ENCODE measurements at regions of chr1 and their contacts with region 1.

Region 1: DNA sequence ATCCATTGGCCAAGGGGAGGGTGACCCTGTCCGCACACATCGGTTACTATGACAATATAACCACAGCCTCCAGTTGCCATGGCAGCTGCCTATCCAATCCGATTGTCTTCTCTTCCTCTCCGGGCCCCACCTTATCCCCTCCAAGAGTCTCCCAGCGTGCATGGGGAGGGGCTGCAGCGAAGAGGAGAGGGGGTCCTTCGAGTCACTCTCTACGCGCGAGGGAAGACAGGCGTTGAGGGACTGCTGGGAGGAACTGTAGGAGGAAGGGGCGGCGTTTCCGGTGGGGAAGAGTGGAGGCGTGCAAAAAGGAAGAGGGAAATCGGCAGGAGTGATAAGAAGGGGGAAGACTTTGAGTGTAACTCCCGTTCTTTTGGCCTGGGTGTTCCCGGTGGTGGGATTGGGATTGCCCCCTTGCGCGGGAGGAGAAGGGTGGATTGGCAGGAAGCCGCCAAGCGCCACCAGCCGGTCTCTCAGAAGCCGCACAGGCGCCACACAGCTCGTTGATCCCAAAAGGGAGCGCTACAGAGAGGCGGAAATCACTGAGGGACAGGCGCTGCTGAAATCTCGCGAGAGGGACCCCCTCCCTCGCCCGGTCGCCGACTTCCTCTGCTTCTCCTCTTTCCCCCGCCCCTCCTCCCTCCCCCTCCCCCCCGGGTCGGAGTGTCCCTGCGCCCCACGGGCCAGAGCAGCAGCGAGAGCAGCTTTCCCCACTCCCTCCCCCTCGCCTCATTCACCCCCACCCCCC is 384 bp upstream of the SMG7 start:
- DNase-seq: peak; percentile 96
- H3K4me3 ChIP-seq: peak overlapping the region; percentile 62 to 91 (median 89)
- H3K27ac ChIP-seq: peak overlapping the region; percentile 90
- H3K4me1 ChIP-seq: peaks cover 19% of the 10 kb centered on the region
- H3K27me3 ChIP-seq: no peaks in the 10 kb centered on the region
- CTCF ChIP-seq: peak in 1 of 2 donors; percentile 11
- POLR2A ChIP-seq: no peak

Region 2: GRCh38 chr1:183198463-183198862 is 273.5 kb before region 1 on chr1:
- CTCF ChIA-PET with region 1: no interaction called
- POLR2A ChIA-PET with region 1: no interaction called
- dilution Hi-C with region 1: no loop called
- intact Hi-C with region 1: no loop called
- DNase-seq: no peak
- H3K4me3 ChIP-seq: no peak overlapping the region
- H3K27ac ChIP-seq: no peak overlapping the region
- H3K4me1 ChIP-seq: peaks cover 12% of the 10 kb centered on the region
- H3K27me3 ChIP-seq: no peaks in the 10 kb centered on the region
- CTCF ChIP-seq: no peak
- POLR2A ChIP-seq: no peak

Region 3: DNA sequence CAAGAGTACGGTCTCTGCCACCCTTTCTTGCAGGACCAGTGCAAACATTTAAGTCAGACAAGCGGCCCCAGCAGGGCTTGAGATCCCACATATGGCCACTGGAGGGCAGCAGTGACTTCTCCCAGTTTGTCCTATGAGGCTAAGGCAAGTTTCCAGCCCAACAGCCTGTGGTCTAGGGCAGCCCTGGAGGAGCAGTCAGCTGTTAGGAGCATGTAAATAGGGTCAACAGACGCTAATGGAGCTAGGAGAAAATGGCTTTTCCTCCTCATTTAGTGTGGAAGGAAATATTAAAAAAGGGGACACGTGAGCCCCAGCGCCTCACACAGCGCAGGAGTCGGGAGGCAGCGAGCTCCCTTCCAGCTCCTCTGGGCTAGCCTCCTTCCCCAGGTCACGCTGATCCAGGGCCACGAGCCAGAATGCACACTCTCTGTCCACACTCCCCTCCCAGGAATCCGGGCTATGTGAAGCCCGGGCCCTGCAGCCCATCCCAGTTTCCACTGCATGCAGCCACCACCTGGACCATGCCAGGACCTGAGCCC is 190.3 kb before region 1 on chr1:
- CTCF ChIA-PET with region 1: interaction called, 4 read pairs
- POLR2A ChIA-PET with region 1: no interaction called
- dilution Hi-C with region 1: no loop called
- intact Hi-C with region 1: loop called (anchors 1 kb)
- DNase-seq: peak; percentile 92
- H3K4me3 ChIP-seq: no peak overlapping the region
- H3K27ac ChIP-seq: no peak overlapping the region
- H3K4me1 ChIP-seq: peaks cover 12% of the 10 kb centered on the region
- H3K27me3 ChIP-seq: no peaks in the 10 kb centered on the region
- CTCF ChIP-seq: peak; percentile 83 to 91
- POLR2A ChIP-seq: no peak

Region 4: DNA sequence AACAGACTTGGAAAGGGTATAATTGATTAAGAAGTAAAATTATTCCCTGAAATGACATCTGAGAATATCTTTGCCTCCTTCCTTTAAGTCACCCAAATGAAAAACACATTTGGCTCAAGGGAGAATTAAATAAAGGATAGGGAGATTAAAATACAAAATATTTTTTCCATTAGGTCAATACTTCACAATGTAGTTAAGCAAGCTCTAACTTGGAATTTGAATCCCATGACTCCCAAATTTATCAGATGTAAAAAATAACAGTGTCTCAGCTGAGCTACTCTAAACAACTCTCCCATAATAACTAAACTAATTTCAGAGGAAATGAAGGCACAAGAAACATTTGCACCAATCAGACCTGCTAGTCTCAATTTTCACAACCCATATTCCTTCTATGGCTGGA is 47.2 kb before region 1 on chr1:
- CTCF ChIA-PET with region 1: no interaction called
- POLR2A ChIA-PET with region 1: no interaction called
- dilution Hi-C with region 1: no loop called
- intact Hi-C with region 1: no loop called
- DNase-seq: no peak
- H3K4me3 ChIP-seq: no peak overlapping the region
- H3K27ac ChIP-seq: no peak overlapping the region
- H3K4me1 ChIP-seq: no peaks in the 10 kb centered on the region
- H3K27me3 ChIP-seq: peaks cover 10 to 18% of the 10 kb centered on the region in 2 experiments
- CTCF ChIP-seq: no peak
- POLR2A ChIP-seq: no peak

Region 5: GRCh38 chr1:183543619-183544204 is 71.8 kb after region 1 on chr1:
- CTCF ChIA-PET with region 1: interaction called, 5 read pairs
- POLR2A ChIA-PET with region 1: no interaction called
- dilution Hi-C with region 1: no loop called
- intact Hi-C with region 1: loop called (anchors 1 kb)
- DNase-seq: peak; percentile 75
- H3K4me3 ChIP-seq: no peak overlapping the region
- H3K27ac ChIP-seq: no peak overlapping the region
- H3K4me1 ChIP-seq: no peaks in the 10 kb centered on the region
- H3K27me3 ChIP-seq: no peaks in the 10 kb centered on the region
- CTCF ChIP-seq: peak; percentile 62 to 71
- POLR2A ChIP-seq: no peak

Region 6: DNA sequence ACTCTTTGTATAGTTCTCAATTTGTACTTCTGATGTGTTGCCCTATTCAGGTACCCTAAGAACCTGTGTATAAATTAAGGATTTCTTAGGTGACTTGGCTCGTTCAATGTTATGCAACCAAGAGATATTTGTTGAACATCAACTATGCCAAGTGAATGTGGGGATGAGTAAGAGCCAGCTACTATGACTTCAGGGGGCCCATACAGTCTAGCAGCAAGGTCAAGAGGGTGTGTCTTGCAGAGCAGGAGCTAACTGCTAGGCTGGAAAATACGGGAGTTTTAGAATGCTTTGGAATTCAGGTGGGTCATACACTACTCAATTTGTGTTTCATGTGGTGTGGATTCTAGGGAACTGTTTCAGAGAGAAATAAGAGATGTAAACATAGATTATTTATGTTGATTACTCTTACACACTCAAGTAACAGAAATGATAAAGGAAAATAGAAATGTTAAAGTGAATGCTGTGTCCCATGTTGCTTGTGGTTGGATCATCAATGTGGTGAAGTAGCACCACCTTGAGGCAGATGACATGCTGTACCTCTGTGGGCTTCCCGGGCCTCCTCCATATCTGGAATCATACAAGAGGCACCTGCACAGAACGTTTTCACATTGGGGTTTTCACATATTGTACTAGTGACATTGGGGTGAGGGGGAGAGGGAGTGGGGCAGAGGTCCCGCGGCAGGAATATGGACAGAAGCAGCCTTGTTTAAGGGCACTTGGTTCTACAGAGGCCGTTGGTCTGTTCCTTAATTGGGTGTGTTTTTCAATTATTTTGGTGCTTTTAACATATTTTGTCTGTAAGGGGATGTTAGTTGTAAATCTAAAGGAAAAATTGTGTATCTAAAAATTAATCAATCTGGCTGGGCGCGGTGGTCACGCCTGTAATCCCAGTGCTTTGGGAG is 151.2 kb after region 1 on chr1:
- CTCF ChIA-PET with region 1: no interaction called
- POLR2A ChIA-PET with region 1: no interaction called
- dilution Hi-C with region 1: no loop called
- intact Hi-C with region 1: loop called (anchors 1 kb)
- DNase-seq: peak; percentile 56
- H3K4me3 ChIP-seq: no peak overlapping the region
- H3K27ac ChIP-seq: no peak overlapping the region
- H3K4me1 ChIP-seq: peaks cover 4% of the 10 kb centered on the region
- H3K27me3 ChIP-seq: no peaks in the 10 kb centered on the region
- CTCF ChIP-seq: peak; percentile 34 to 45
- POLR2A ChIP-seq: no peak

Region 7: GRCh38 chr1:183734543-183735036 is 262.7 kb after region 1 on chr1:
- CTCF ChIA-PET with region 1: no interaction called
- POLR2A ChIA-PET with region 1: no interaction called
- dilution Hi-C with region 1: no loop called
- intact Hi-C with region 1: no loop called
- DNase-seq: no peak
- H3K4me3 ChIP-seq: no peak overlapping the region
- H3K27ac ChIP-seq: no peak overlapping the region
- H3K4me1 ChIP-seq: peaks cover under 1% of the 10 kb centered on the region
- H3K27me3 ChIP-seq: no peaks in the 10 kb centered on the region
- CTCF ChIP-seq: no peak
- POLR2A ChIP-seq: no peak

Region 8: GRCh38 chr1:184051485-184052193 is 579.7 kb after region 1 on chr1 and contains the start of gene TSEN15:
- CTCF ChIA-PET with region 1: no interaction called
- POLR2A ChIA-PET with region 1: no interaction called
- dilution Hi-C with region 1: no loop called
- intact Hi-C with region 1: loop called (anchors 5 kb)
- DNase-seq: peak; percentile 75
- H3K4me3 ChIP-seq: peak within 1 kb of the TSS; percentile 85 to 89 (median 85)
- H3K27ac ChIP-seq: peak within 1 kb of the TSS; percentile 54
- H3K4me1 ChIP-seq: peaks cover 11% of the 10 kb centered on the region
- H3K27me3 ChIP-seq: peaks cover 7 to 17% of the 10 kb centered on the region in 2 experiments
- CTCF ChIP-seq: no peak
- POLR2A ChIP-seq: peak; percentile 79
- total RNA-seq, gene TSEN15: 25.8 and 26.4 TPM in 2 replicates

Measured in endothelial cell of umbilical vein (primary cell).